PC-9 (cell line): ENCODE measurements at regions of chr4 and their contacts with region 1.

Region 1: GRCh38 chr4:72357908-72358307 is 211.1 kb downstream of the ADAMTS3 start:
- DNase-seq: no peak
- H3K4me3 ChIP-seq: no peak overlapping the region
- H3K27ac ChIP-seq: no peak overlapping the region
- H3K4me1 ChIP-seq: no peaks in the 10 kb centered on the region
- H3K27me3 ChIP-seq: no peaks in the 10 kb centered on the region
- CTCF ChIP-seq: no peak

Region 2: GRCh38 chr4:72255269-72255668 is 102.6 kb before region 1 on chr4:
- CTCF ChIA-PET with region 1: no interaction called
- POLR2A ChIA-PET with region 1: no interaction called
- intact Hi-C with region 1: no loop called
- DNase-seq: no peak
- H3K4me3 ChIP-seq: no peak overlapping the region
- H3K27ac ChIP-seq: no peak overlapping the region
- H3K4me1 ChIP-seq: no peaks in the 10 kb centered on the region
- H3K27me3 ChIP-seq: no peaks in the 10 kb centered on the region
- CTCF ChIP-seq: no peak

Region 3: GRCh38 chr4:72340803-72341431 is 17.0 kb before region 1 on chr4:
- CTCF ChIA-PET with region 1: no interaction called
- POLR2A ChIA-PET with region 1: interaction called, 10 read pairs
- intact Hi-C with region 1: no loop called
- DNase-seq: peak in 1 of 2 experiments; percentile 48
- H3K4me3 ChIP-seq: no peak overlapping the region
- H3K27ac ChIP-seq: no peak overlapping the region
- H3K4me1 ChIP-seq: no peaks in the 10 kb centered on the region
- H3K27me3 ChIP-seq: no peaks in the 10 kb centered on the region
- CTCF ChIP-seq: no peak

Region 4: DNA sequence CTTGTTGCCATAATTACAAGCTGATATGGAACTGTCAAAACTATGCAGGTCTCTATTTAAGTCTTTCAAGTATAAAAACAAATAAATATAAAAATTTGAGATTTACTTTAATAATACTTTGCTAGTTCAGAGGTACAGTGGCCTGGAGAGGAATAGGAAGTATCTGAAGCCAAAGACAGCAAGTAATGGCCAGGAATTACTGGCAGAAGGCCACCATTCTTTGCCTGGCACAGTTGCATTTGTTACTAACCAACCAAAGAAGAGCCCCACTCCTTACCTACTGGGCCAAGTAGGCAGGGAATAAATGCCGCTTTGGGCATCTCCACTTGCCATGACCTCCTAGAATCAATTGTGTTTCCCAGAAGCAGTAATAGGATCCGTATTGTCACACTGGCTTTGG is 224.9 kb after region 1 on chr4:
- CTCF ChIA-PET with region 1: no interaction called
- POLR2A ChIA-PET with region 1: no interaction called
- intact Hi-C with region 1: no loop called
- DNase-seq: no peak
- H3K4me3 ChIP-seq: no peak overlapping the region
- H3K27ac ChIP-seq: no peak overlapping the region
- H3K4me1 ChIP-seq: no peaks in the 10 kb centered on the region
- H3K27me3 ChIP-seq: no peaks in the 10 kb centered on the region
- CTCF ChIP-seq: no peak

Region 5: GRCh38 chr4:72689923-72690322 is 332.0 kb after region 1 on chr4:
- CTCF ChIA-PET with region 1: no interaction called
- POLR2A ChIA-PET with region 1: no interaction called
- intact Hi-C with region 1: no loop called
- DNase-seq: no peak
- H3K4me3 ChIP-seq: no peak overlapping the region
- H3K27ac ChIP-seq: no peak overlapping the region
- H3K4me1 ChIP-seq: no peaks in the 10 kb centered on the region
- H3K27me3 ChIP-seq: no peaks in the 10 kb centered on the region
- CTCF ChIP-seq: no peak